Activated CD8-positive, alpha-beta T cell treated with anti-CD3 and anti-CD28 coated beads for 36 hours (primary cell): ENCODE measurements at regions of chr6 and their contacts with region 1.

Region 1: GRCh38 chr6:14066782-14067406 is 50.7 kb upstream of the CD83 start:
- DNase-seq: no peak
- ATAC-seq: peak; percentile 92
- H3K4me3 Mint-ChIP-seq: no peak overlapping the region
- H3K27ac Mint-ChIP-seq: no peak overlapping the region
- H3K4me1 Mint-ChIP-seq: peaks cover 11% of the 10 kb centered on the region
- H3K27me3 Mint-ChIP-seq: peaks cover 8% of the 10 kb centered on the region
- CTCF ChIP-seq: peak; percentile 73

Region 2: GRCh38 chr6:13873285-13874190 is 193.4 kb before region 1 on chr6:
- CTCF ChIA-PET with region 1: interaction called, 19 read pairs
- POLR2A ChIA-PET with region 1: no interaction called
- intact Hi-C with region 1: no loop called
- DNase-seq: peak; percentile 86
- ATAC-seq: peak; percentile 95
- H3K4me3 Mint-ChIP-seq: peak overlapping the region; percentile 60
- H3K27ac Mint-ChIP-seq: no peak overlapping the region
- H3K4me1 Mint-ChIP-seq: peaks cover 12% of the 10 kb centered on the region
- H3K27me3 Mint-ChIP-seq: peaks cover 7% of the 10 kb centered on the region
- CTCF ChIP-seq: peak; percentile 86

Region 3: GRCh38 chr6:13924146-13924948 is 142.5 kb before region 1 on chr6:
- CTCF ChIA-PET with region 1: interaction called, 14 read pairs
- POLR2A ChIA-PET with region 1: interaction called, 5 read pairs
- intact Hi-C with region 1: no loop called
- DNase-seq: peak; percentile 57
- ATAC-seq: peak; percentile 29
- H3K4me3 Mint-ChIP-seq: peak overlapping the region; percentile 66
- H3K27ac Mint-ChIP-seq: no peak overlapping the region
- H3K4me1 Mint-ChIP-seq: peaks cover 14% of the 10 kb centered on the region
- H3K27me3 Mint-ChIP-seq: peaks cover 53% of the 10 kb centered on the region
- CTCF ChIP-seq: no peak

Region 4: DNA sequence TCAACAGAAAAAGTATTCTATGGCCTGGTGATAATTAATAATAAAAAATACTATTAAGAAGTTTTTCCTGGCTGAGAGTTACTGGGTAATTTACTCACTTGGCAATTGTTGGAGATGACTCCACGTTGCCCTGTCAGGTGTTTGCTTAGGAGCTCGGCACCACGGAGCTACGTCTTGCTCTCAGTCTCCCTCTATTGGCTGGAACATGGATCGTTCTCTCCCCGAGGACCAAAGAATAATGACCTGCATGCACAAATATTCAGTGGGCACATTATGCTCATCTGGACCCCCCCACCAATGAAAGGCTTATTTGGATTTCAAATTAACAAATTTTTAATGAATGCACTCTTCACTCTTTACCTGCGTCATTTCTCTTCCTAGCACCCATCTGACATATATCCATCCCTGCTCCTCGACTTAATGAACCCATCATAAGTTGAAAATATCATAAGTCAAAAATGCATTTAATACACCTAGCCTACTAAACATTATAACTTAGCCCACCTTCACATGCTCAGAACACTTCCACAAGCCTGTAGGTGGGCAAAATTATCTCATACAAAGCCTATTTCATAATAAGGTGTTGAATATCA is 20.3 kb before region 1 on chr6:
- CTCF ChIA-PET with region 1: interaction called, 30 read pairs
- POLR2A ChIA-PET with region 1: no interaction called
- intact Hi-C with region 1: no loop called
- DNase-seq: peak; percentile 61
- ATAC-seq: peak; percentile 89
- H3K4me3 Mint-ChIP-seq: no peak overlapping the region
- H3K27ac Mint-ChIP-seq: no peak overlapping the region
- H3K4me1 Mint-ChIP-seq: peaks cover 4% of the 10 kb centered on the region
- H3K27me3 Mint-ChIP-seq: peaks cover 19% of the 10 kb centered on the region
- CTCF ChIP-seq: peak; percentile 69

Region 5: GRCh38 chr6:14135893-14136539 is 69.1 kb after region 1 on chr6:
- CTCF ChIA-PET with region 1: interaction called, 56 read pairs
- POLR2A ChIA-PET with region 1: no interaction called
- intact Hi-C with region 1: no loop called
- DNase-seq: no peak
- ATAC-seq: no peak
- H3K4me3 Mint-ChIP-seq: no peak overlapping the region
- H3K27ac Mint-ChIP-seq: no peak overlapping the region
- H3K4me1 Mint-ChIP-seq: peaks cover 2% of the 10 kb centered on the region
- H3K27me3 Mint-ChIP-seq: no peaks in the 10 kb centered on the region
- CTCF ChIP-seq: no peak